GM18951 (cell line): ENCODE measurements at regions of chr12 and their contacts with region 1.

Region 1: DNA sequence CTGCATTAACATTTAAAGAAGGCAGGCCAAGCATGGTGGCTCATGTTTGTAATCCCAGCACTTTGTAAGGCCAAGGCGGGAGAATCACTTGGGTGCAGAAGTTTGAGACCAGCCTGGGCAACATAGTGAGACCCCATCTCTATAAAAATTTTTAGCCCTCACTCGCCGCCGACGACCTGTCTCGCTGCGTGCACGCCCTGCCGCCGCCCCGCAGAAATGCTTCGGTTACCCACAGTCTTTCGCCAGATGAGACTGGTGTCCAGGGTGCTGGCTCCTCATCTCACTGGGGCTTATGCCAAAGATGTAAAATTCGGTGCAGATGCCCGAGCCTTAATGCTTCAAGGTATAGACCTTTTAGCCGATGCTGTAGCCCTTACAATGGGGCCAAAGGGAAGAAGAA is 10.8 kb upstream of the RBMS2 start:
- POLR2A ChIP-seq: no peak

Region 2: DNA sequence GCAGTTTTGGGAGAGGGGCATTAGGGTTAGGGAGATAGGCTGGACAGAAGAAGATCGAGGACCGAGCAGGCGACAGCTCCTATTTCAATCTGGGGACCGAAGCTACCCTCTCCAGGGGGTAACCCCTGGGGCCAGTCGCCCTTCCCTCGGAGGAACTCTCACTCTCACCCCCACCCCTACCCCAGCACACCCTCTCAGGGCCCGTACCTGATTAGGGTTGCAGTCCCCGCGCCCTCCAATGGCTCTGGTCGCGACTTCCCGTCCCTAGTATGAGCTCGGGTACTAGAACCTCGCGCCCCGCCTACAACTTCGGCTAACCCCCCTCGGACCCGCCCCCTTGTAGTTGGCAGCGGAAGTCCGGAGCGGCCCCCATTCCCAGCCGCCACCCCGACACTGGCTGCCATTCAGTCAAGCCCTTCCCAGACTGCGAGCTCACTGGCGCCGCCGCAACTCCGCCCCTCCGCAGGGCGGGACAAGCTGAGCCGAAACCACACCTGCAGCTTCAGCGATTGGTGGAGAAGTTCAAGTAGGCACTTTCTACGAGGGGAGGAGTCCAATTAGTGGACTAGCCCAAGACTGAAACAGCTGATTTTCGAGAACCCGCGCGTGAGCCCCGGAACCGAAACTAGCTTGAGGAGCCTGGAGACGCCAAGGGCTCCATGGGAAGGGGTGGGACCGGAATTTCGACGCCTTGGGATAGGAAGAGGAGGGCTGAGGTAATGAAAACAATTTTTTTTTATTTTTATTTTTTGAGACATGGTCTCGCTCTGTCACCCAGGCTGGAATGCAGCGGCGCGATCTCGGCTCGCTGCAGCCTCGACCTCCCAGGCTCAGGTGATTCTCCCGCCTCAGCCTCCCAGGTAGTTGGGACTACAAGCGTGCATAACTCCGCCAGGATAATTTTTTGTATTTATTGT is 150.7 kb before region 1 on chr12 and contains the start of gene STAT2:
- in situ Hi-C with region 1: no loop called
- POLR2A ChIP-seq: peak; percentile 95

Region 3: GRCh38 chr12:56589783-56590182 is 79.0 kb after region 1 on chr12:
- in situ Hi-C with region 1: loop called (anchors 5 kb)
- POLR2A ChIP-seq: no peak